Naive thymus-derived CD4-positive, alpha-beta T cell (primary cell): ENCODE measurements at regions of chr6 and their contacts with region 1.

Region 1: GRCh38 chr6:25017932-25018567 is 82.3 kb upstream of the RIPOR2 start:
- DNase-seq: peak; percentile 52 to 86 (median 81)
- ATAC-seq: peak; percentile 88
- H3K4me3 ChIP-seq: no peak overlapping the region
- H3K4me3 Mint-ChIP-seq: peak overlapping the region in 9 of 10 donors; percentile 35 to 79 (median 67)
- H3K27ac ChIP-seq: peak overlapping the region; percentile 61
- H3K27ac Mint-ChIP-seq: peak overlapping the region; percentile 40 to 98 (median 94)
- H3K4me1 ChIP-seq: peaks cover 9 to 34% of the 10 kb centered on the region in 2 donors
- H3K4me1 Mint-ChIP-seq: peaks cover 25 to 48% (median 39%) of the 10 kb centered on the region in 7 donors
- H3K27me3 ChIP-seq: no peaks in the 10 kb centered on the region
- H3K27me3 Mint-ChIP-seq: no peaks in the 10 kb centered on the region

Region 2: GRCh38 chr6:24666641-24667377 is 351.2 kb before region 1 on chr6 and contains the starts of genes ACOT13 and TDP2:
- CTCF ChIA-PET with region 1: no interaction called
- POLR2A ChIA-PET with region 1: no interaction called
- intact Hi-C with region 1: loop called in 1 of 2 experiments (anchors 1 kb)
- DNase-seq: peak; percentile 93 to 97 (median 96)
- ATAC-seq: peak; percentile 97
- H3K4me3 ChIP-seq: peak within 1 kb of the TSS; percentile 91
- H3K4me3 Mint-ChIP-seq: peak within 1 kb of the TSS; percentile 93 to 100 (median 98)
- H3K27ac ChIP-seq: peak within 1 kb of the TSS; percentile 88
- H3K27ac Mint-ChIP-seq: peak within 1 kb of the TSS; percentile 91 to 99 (median 98)
- H3K4me1 ChIP-seq: peaks cover 19 to 27% of the 10 kb centered on the region in 2 donors
- H3K4me1 Mint-ChIP-seq: peaks cover 28 to 70% (median 68%) of the 10 kb centered on the region in 7 donors
- H3K27me3 ChIP-seq: no peaks in the 10 kb centered on the region
- H3K27me3 Mint-ChIP-seq: no peaks in the 10 kb centered on the region
- total RNA-seq, gene ACOT13: 4.0 to 20.0 (median 12.5) TPM
- total RNA-seq, gene TDP2: 38.6 to 69.7 (median 48.2) TPM

Region 3: GRCh38 chr6:24774696-24775519 is 243.1 kb before region 1 on chr6 and contains the start of gene GMNN:
- CTCF ChIA-PET with region 1: no interaction called
- POLR2A ChIA-PET with region 1: no interaction called
- intact Hi-C with region 1: loop called (anchors 2 to 5 kb)
- DNase-seq: peak; percentile 91 to 99 (median 94)
- ATAC-seq: peak; percentile 95
- H3K4me3 ChIP-seq: peak within 1 kb of the TSS; percentile 93
- H3K4me3 Mint-ChIP-seq: peak within 1 kb of the TSS; percentile 98 to 99 (median 98)
- H3K27ac ChIP-seq: peak within 1 kb of the TSS; percentile 90
- H3K27ac Mint-ChIP-seq: peak within 1 kb of the TSS; percentile 91 to 98 (median 97)
- H3K4me1 ChIP-seq: peaks cover 6 to 7% of the 10 kb centered on the region in 2 donors
- H3K4me1 Mint-ChIP-seq: peaks cover 10 to 38% (median 21%) of the 10 kb centered on the region in 7 donors
- H3K27me3 ChIP-seq: no peaks in the 10 kb centered on the region
- H3K27me3 Mint-ChIP-seq: no peaks in the 10 kb centered on the region
- total RNA-seq, gene GMNN: 5.1 to 54.6 (median 7.0) TPM

Region 4: GRCh38 chr6:24910961-24911712 is 106.9 kb before region 1 on chr6:
- CTCF ChIA-PET with region 1: interaction called, 4 read pairs
- POLR2A ChIA-PET with region 1: interaction called, 7 read pairs
- intact Hi-C with region 1: loop called in 1 of 2 experiments (anchors 1 kb)
- DNase-seq: peak in 6 of 9 donors; percentile 37 to 67 (median 56)
- ATAC-seq: peak; percentile 60
- H3K4me3 ChIP-seq: peak overlapping the region; percentile 41
- H3K4me3 Mint-ChIP-seq: peak overlapping the region; percentile 92 to 97 (median 96)
- H3K27ac ChIP-seq: peak overlapping the region; percentile 75
- H3K27ac Mint-ChIP-seq: peak overlapping the region; percentile 88 to 99 (median 97)
- H3K4me1 ChIP-seq: peaks cover 88 to 93% of the 10 kb centered on the region in 2 donors
- H3K4me1 Mint-ChIP-seq: peaks cover 88 to 98% (median 97%) of the 10 kb centered on the region in 7 donors
- H3K27me3 ChIP-seq: no peaks in the 10 kb centered on the region
- H3K27me3 Mint-ChIP-seq: no peaks in the 10 kb centered on the region

Region 5: DNA sequence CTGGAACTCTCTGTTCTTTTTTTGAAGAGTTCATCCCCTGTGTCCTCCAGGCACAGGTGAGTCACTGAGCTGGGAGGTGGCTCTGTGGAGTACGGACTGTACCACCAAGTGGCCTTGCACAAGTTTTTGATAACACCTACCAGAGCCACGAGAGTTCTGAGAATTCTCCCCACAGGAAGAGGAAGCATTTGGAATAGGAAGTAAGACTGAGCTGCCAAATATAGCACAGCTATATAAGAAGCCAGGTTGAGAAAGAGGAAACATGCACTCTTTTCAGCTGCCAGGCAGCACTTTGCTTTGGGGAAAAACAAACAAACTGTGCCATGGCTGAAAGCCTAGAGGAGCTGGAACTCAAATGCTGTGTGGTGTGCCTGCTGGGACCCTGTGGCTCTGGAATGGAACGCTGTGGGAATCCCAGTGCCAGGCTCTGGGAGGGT is 11.5 kb before region 1 on chr6:
- CTCF ChIA-PET with region 1: interaction called, 10 read pairs
- POLR2A ChIA-PET with region 1: interaction called, 9 read pairs
- intact Hi-C with region 1: loop called (anchors 1 kb)
- DNase-seq: peak in 7 of 9 donors; percentile 30 to 51 (median 43)
- ATAC-seq: peak; percentile 80
- H3K4me3 ChIP-seq: peak overlapping the region; percentile 27
- H3K4me3 Mint-ChIP-seq: peak overlapping the region; percentile 56 to 84 (median 75)
- H3K27ac ChIP-seq: peak overlapping the region; percentile 64
- H3K27ac Mint-ChIP-seq: peak overlapping the region; percentile 85 to 94 (median 89)
- H3K4me1 ChIP-seq: peaks cover 46 to 50% of the 10 kb centered on the region in 2 donors
- H3K4me1 Mint-ChIP-seq: peaks cover 55 to 90% (median 86%) of the 10 kb centered on the region in 7 donors
- H3K27me3 ChIP-seq: no peaks in the 10 kb centered on the region
- H3K27me3 Mint-ChIP-seq: no peaks in the 10 kb centered on the region

Region 6: GRCh38 chr6:25078141-25078540 is 60.1 kb after region 1 on chr6:
- CTCF ChIA-PET with region 1: no interaction called
- POLR2A ChIA-PET with region 1: no interaction called
- intact Hi-C with region 1: no loop called
- DNase-seq: no peak
- ATAC-seq: no peak
- H3K4me3 ChIP-seq: no peak overlapping the region
- H3K4me3 Mint-ChIP-seq: no peak overlapping the region
- H3K27ac ChIP-seq: no peak overlapping the region
- H3K27ac Mint-ChIP-seq: no peak overlapping the region
- H3K4me1 ChIP-seq: no peaks in the 10 kb centered on the region
- H3K4me1 Mint-ChIP-seq: peaks cover 0 to 11% (median 9%) of the 10 kb centered on the region in 7 donors
- H3K27me3 ChIP-seq: no peaks in the 10 kb centered on the region
- H3K27me3 Mint-ChIP-seq: no peaks in the 10 kb centered on the region

Region 7: GRCh38 chr6:25088513-25088912 is 70.5 kb after region 1 on chr6:
- CTCF ChIA-PET with region 1: no interaction called
- POLR2A ChIA-PET with region 1: no interaction called
- intact Hi-C with region 1: no loop called
- DNase-seq: no peak
- ATAC-seq: no peak
- H3K4me3 ChIP-seq: no peak overlapping the region
- H3K4me3 Mint-ChIP-seq: no peak overlapping the region
- H3K27ac ChIP-seq: no peak overlapping the region
- H3K27ac Mint-ChIP-seq: no peak overlapping the region
- H3K4me1 ChIP-seq: peaks cover 18 to 22% of the 10 kb centered on the region in 2 donors
- H3K4me1 Mint-ChIP-seq: peaks cover 5 to 28% (median 9%) of the 10 kb centered on the region in 7 donors
- H3K27me3 ChIP-seq: no peaks in the 10 kb centered on the region
- H3K27me3 Mint-ChIP-seq: no peaks in the 10 kb centered on the region